Posterior vena cava (tissue), 2 donors: ENCODE measurements at regions of chr16 and their contacts with region 1.

Region 1: GRCh38 chr16:69861292-69862030 is 89.7 kb upstream of the CLEC18A start:
- DNase-seq: no peak

Region 2: DNA sequence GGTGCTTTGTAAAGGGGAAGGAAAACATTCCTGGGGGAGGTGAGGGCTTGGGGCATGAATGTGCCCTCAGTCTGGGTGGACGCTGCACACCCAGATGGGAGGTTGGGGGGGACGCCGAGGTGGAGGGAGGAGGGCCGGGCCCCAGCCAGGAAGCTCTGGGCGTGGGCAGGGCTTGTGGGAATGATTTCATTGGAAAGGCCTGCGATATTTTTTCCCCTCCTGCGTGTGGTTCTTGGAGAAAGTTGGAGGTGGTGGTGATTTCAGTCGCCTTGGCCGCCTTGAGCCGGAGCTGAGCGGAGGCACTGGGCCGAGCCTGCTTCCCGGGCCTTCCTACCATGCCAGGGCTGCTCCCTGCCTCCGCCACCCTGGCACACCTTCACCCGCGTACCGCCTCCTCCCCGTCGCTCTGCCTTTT is 63.3 kb after region 1 on chr16:
- intact Hi-C with region 1: loop called in 1 of 2 experiments (anchors 10 kb)
- DNase-seq: peak; percentile 87